ENCODE measurements at regions of chr2 and their contacts with region 1.

Region 1: GRCh38 chr2:21317131-21317530 is 193.4 kb downstream of the TDRD15 start:
- H3K4me3 Mint-ChIP-seq: no peak overlapping the region
- H3K27ac Mint-ChIP-seq: no peak overlapping the region
- H3K4me1 Mint-ChIP-seq: peaks cover 7% of the 10 kb centered on the region
- H3K27me3 Mint-ChIP-seq: no peaks in the 10 kb centered on the region

Region 2: DNA sequence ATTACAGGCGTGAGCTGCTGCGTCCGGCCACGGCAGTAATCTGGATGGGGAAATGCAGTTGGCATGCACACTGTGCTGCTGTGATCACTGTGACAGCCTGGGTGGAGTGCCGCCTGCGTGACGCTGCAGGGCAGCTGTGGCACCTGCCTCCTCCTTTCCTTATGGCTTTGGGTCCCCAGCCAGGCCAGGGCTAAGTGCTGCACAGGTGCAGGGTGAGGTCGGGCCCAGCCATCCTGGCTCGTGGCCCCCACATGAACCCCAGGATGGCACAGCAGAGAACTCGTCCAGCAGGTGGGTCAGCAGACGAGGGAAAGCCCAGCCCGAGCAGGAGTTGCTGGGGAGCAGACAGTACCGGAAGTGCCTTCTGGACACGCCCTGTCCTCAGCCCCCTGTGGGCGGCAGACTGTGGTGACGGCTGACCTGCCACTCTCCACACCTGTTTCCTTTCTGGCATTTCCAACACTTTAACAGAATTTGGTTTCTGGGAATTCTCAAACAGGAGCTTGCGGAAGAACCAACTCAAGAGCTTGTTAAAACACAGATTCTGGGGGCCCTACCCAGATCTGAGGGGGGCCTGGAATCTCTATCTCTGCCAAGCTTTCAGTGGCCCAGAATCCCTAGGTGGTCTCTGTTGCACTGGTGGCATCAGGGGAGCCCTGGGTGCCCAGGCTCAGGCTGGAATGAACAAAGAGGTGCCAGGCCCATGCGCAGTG is 683.2 kb before region 1 on chr2:
- intact Hi-C with region 1: no loop called
- H3K4me3 Mint-ChIP-seq: no peak overlapping the region
- H3K27ac Mint-ChIP-seq: no peak overlapping the region
- H3K4me1 Mint-ChIP-seq: peaks cover 6% of the 10 kb centered on the region
- H3K27me3 Mint-ChIP-seq: no peaks in the 10 kb centered on the region

Region 3: DNA sequence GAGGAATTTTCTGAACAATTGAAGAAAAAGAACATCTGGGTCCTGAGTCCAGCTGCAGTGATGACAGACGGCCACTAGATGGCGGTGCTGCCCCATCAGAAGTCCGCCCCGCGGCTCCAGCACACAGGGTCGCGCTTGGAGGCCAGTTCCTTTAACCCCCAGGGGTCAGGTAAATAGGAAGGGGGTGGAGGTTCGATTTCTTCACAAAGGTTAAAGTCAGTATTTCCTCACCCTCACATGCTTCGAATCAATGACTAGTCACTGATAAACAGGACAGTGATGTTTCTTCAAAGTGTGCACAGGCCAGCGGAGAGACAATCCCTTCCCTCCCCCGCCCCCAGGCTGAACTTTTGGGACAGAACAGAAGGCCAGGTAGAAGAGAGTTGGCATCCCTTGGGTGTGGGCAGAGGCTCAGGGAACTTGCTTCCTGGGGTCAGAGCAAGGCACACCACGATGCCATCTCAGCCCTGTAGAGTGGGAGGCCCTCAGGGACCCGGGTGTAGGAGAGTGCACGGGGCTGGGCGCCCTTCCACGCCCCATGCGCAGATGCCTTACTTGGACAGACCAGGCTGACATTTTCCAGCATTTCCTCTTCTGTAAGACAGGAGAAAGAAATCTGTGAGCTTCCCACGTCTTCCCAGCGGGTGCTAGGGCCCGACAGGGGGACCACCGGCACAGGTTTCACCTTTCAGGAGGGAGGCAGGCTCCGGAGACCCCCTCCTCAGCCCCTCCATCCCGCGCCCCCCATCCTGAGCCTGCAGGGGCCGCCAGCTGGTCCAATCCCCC is 274.0 kb before region 1 on chr2:
- intact Hi-C with region 1: loop called (anchors 1 kb)
- H3K4me3 Mint-ChIP-seq: no peak overlapping the region
- H3K27ac Mint-ChIP-seq: no peak overlapping the region
- H3K4me1 Mint-ChIP-seq: no peaks in the 10 kb centered on the region
- H3K27me3 Mint-ChIP-seq: peaks cover 31% of the 10 kb centered on the region

Region 4: GRCh38 chr2:21175895-21176646 is 141.1 kb before region 1 on chr2:
- intact Hi-C with region 1: loop called (anchors 1 kb)
- H3K4me3 Mint-ChIP-seq: no peak overlapping the region
- H3K27ac Mint-ChIP-seq: no peak overlapping the region
- H3K4me1 Mint-ChIP-seq: no peaks in the 10 kb centered on the region
- H3K27me3 Mint-ChIP-seq: peaks cover 7% of the 10 kb centered on the region

Region 5: GRCh38 chr2:21372654-21373053 is 55.5 kb after region 1 on chr2:
- intact Hi-C with region 1: no loop called
- H3K4me3 Mint-ChIP-seq: no peak overlapping the region
- H3K27ac Mint-ChIP-seq: no peak overlapping the region
- H3K4me1 Mint-ChIP-seq: no peaks in the 10 kb centered on the region
- H3K27me3 Mint-ChIP-seq: peaks cover 6% of the 10 kb centered on the region

Region 6: DNA sequence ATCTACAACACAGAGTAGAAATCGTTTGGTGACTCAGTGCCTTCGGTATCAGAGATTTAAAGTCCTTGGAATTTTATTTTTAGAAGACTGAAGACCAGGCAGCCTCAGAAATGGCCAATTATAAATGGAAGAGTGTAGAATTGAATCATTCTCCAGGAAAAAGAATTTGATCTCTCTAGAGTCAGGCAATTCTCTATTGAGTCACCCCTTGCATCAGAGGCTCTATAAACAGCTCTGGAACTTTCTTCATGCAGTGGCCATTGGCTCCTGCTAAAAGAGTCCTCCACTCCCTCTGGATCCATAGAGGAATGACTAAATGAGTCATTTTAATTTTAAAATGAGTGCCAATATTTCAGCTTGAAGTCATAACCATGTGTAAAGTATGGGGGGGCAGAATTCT is 622.8 kb after region 1 on chr2:
- intact Hi-C with region 1: no loop called
- H3K4me3 Mint-ChIP-seq: no peak overlapping the region
- H3K27ac Mint-ChIP-seq: no peak overlapping the region
- H3K4me1 Mint-ChIP-seq: no peaks in the 10 kb centered on the region
- H3K27me3 Mint-ChIP-seq: no peaks in the 10 kb centered on the region

Measured in dendritic cell treated with granulocyte-macrophage colony-stimulating factor and Interleukin-4, amounts not matched to agents 40 ng/mL and 50 ng/mL, for 4 days (primary cell).